ENCODE measurements at regions of chr4 and their contacts with region 1.

Region 1: GRCh38 chr4:1712216-1713002 is at the start of gene SLBP:
- DNase-seq: peak; percentile 98
- ATAC-seq: peak; percentile 87
- H3K4me3 Mint-ChIP-seq: peak within 1 kb of the TSS; percentile 99
- H3K27ac Mint-ChIP-seq: peak within 1 kb of the TSS; percentile 98
- H3K4me1 Mint-ChIP-seq: peaks cover 53% of the 10 kb centered on the region
- H3K27me3 Mint-ChIP-seq: no peaks in the 10 kb centered on the region
- total RNA-seq, gene SLBP: 99.7 to 103 TPM

Region 2: GRCh38 chr4:1693129-1693896 is 19.1 kb before region 1 on chr4:
- POLR2A ChIA-PET with region 1: interaction called, 27 read pairs
- DNase-seq: peak; percentile 78
- ATAC-seq: peak; percentile 93
- H3K4me3 Mint-ChIP-seq: no peak overlapping the region
- H3K27ac Mint-ChIP-seq: peak overlapping the region; percentile 49
- H3K4me1 Mint-ChIP-seq: peaks cover 3% of the 10 kb centered on the region
- H3K27me3 Mint-ChIP-seq: no peaks in the 10 kb centered on the region

Region 3: DNA sequence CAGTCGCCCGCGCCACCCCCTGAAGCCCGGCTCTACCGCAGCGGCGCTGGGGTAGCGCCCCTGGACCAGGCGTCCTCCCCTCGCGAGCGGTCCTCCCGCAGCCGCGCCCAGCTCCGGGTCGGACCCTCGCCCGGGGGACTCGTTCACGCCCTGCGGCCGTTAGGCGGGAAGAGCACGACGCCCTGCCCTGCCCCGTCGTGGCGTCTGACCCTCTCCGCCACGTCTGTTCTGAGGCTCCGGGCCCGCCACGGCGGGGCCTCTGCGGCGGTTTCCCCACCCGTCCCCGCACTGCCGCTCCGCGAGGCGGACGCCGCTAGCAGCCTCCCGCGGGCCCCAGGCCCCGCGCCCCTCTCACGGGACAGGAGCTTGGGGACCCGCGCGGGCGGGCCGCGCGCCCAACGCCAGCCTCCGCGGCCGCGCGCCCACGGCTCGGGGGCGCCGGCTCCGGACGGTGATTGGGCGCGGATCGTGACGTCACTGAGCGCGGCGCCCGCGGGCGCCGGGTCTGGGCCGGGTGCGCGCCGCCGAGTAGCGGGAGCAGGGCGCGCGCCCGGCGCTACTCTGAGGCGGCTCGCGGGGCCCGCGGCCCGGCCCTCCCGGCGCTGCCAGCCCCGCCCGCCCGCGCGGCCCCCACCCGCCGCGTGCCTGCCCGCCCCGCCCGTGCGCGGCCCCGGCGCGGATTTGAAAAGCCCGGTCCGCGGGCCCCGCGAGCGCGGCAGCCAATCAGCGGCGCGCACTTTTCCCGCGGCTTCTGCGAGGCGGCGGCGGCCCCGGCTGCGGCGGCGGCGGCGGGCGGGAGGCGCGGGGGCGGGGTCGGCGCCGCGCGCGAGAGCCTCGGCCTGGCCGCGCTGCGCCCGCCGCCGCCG is 158.4 kb after region 1 on chr4 and contains the start of gene NSD2:
- POLR2A ChIA-PET with region 1: interaction called, 14 read pairs
- DNase-seq: peak; percentile 95
- ATAC-seq: peak; percentile 64
- H3K4me3 Mint-ChIP-seq: peak within 1 kb of the TSS; percentile 99
- H3K27ac Mint-ChIP-seq: peak within 1 kb of the TSS; percentile 99
- H3K4me1 Mint-ChIP-seq: peaks cover 28% of the 10 kb centered on the region
- H3K27me3 Mint-ChIP-seq: no peaks in the 10 kb centered on the region
- total RNA-seq, gene NSD2: 218 to 231 TPM

Region 4: GRCh38 chr4:1890979-1891570 is 178.7 kb after region 1 on chr4:
- POLR2A ChIA-PET with region 1: no interaction called
- DNase-seq: no peak
- ATAC-seq: no peak
- H3K4me3 Mint-ChIP-seq: no peak overlapping the region
- H3K27ac Mint-ChIP-seq: no peak overlapping the region
- H3K4me1 Mint-ChIP-seq: peaks cover 26% of the 10 kb centered on the region
- H3K27me3 Mint-ChIP-seq: no peaks in the 10 kb centered on the region